CD4-positive, alpha-beta memory T cell (primary cell): ENCODE measurements at regions of chr2 and their contacts with region 1.

Region 1: DNA sequence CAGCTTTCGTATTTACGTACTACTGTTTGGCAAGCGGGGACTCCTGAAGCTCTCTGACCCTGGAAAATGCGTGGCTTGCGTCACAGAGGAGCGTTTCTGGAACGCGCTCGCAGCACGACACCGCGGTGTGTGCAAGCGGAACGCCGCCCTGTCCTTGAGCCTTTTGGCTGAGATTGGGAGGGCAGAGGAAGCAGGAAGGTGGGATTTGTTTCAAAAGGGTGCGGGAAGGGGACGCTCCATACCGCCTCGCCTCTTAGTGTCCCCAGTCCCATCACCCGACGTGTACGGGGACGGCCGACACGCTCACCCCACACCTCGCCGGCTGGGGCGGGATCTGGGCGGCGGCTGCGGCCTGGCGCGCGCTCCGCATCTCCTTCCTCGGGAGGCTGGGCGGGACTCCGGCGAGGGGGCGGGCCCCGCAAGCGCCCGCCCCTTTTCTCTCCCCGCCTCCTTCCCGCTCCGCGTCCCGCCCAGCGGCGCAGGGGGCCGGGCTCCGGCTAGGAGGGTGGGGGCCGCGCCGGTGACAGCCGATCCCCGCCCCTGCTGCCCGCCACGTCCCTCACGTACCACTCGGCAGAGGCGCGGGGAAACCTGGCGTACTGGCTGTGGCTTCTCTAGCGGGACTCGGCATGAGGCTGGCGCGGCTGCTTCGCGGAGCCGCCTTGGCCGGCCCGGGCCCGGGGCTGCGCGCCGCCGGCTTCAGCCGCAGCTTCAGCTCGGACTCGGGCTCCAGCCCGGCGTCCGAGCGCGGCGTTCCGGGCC is at the start of gene PDK1:
- DNase-seq: peak; percentile 90 to 94 (median 93)
- H3K4me3 ChIP-seq: peak within 1 kb of the TSS; percentile 62 to 82
- H3K4me3 Mint-ChIP-seq: peak within 1 kb of the TSS; percentile 90 to 97 (median 94)
- H3K27ac ChIP-seq: peak within 1 kb of the TSS; percentile 82
- H3K27ac Mint-ChIP-seq: peak within 1 kb of the TSS; percentile 78 to 96 (median 93)
- H3K4me1 ChIP-seq: peaks cover 31% of the 10 kb centered on the region
- H3K4me1 Mint-ChIP-seq: peaks cover 22 to 51% (median 38%) of the 10 kb centered on the region in 4 donors
- H3K27me3 ChIP-seq: no peaks in the 10 kb centered on the region
- H3K27me3 Mint-ChIP-seq: peaks cover 0 to 1% of the 10 kb centered on the region in 2 donors
- total RNA-seq, gene PDK1: 34.2 to 36.8 TPM

Region 2: DNA sequence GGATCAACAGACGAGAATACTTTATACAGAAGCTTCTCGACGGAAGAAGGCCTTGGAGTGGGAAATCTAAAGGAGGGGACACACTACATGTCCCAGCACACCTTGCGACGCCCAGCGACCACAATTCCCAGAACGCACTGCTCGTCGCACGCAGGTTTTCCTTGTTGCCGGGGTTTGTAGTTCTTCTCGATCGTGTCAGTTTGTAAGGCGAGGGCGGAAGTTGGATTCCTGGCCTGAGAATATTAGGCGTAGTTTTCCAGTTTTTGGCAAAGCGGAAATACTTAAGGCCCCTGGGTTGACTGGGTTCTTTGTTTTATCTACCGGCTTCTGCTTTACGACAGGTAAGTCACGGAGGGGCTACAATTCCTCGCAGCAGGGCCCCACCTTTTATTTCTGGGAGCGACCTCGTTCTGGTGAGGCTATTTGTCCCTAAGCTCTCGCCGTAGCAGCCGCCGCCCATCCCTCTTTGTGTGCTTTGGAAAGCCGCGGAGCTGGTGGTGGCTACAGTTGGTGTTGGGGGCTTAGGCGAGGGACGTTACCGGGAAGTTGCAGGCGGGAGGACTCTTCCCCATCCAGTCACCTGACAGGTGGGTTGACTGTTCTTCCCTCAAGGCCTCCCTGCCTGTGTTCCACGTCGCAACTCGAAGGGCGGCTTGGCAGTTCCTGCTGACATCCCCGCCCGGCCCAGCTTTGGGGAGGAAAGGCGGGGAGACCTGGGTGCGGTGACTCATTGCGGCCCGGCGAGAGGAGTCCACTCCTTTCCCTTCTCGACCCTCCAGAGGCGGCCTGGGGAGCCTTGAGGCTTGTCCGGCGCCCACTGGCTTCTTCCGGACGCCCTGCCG is 868.2 kb before region 1 on chr2 and contains the start of gene DYNC1I2:
- CTCF ChIA-PET with region 1: no interaction called
- POLR2A ChIA-PET with region 1: no interaction called
- intact Hi-C with region 1: loop called (anchors 2 kb)
- DNase-seq: peak; percentile 72 to 83 (median 79)
- H3K4me3 ChIP-seq: peak within 1 kb of the TSS; percentile 52 to 75
- H3K4me3 Mint-ChIP-seq: peak within 1 kb of the TSS; percentile 90 to 97 (median 94)
- H3K27ac ChIP-seq: peak within 1 kb of the TSS; percentile 50
- H3K27ac Mint-ChIP-seq: peak within 1 kb of the TSS; percentile 86 to 97 (median 94)
- H3K4me1 ChIP-seq: peaks cover 13% of the 10 kb centered on the region
- H3K4me1 Mint-ChIP-seq: peaks cover 20 to 31% (median 27%) of the 10 kb centered on the region in 4 donors
- H3K27me3 ChIP-seq: no peaks in the 10 kb centered on the region
- H3K27me3 Mint-ChIP-seq: no peaks in the 10 kb centered on the region
- total RNA-seq, gene DYNC1I2: 50.2 to 50.3 TPM

Region 3: DNA sequence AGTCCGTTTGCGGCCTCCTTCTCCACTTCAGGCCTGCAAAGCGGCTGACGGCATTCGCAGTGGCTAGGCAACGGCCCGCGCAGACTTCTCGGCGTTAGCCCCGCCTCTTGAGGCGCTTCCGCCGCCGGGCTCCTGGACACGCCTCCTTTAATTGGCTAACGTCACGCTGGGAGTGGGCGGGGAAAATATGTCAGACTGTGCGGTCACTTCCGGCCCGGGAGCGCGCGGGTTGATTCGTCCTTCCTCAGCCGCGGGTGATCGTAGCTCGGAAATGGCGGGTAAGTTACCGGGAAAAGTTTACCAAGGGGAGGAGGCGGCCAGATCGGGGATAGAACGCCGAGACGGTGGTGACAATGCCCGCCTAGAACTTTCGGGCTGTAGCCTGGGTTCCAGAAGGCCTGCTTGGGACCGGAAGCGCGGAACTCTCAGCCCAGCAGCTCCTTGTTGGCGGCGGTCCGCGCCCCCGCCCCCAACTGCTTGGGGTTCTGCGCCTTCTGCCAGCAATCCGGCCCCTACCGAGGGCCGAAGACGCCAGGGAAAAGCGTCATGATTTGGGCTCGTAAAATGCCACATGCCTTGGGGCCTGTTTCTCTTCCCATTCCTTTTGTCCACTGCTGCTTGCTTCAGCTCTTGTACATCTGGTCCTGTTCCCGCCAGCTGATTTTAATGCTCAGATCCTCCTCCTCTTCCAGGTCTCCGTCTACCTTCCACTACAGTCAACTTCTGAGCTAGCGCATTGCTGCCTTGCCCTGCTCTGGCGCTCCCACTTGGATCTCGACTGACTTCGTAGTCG is 633.3 kb before region 1 on chr2 and contains the start of gene HAT1:
- CTCF ChIA-PET with region 1: no interaction called
- POLR2A ChIA-PET with region 1: interaction called, 5 read pairs
- intact Hi-C with region 1: loop called (anchors 1 kb)
- DNase-seq: peak; percentile 96 to 98 (median 97)
- H3K4me3 ChIP-seq: peak within 1 kb of the TSS; percentile 70 to 88
- H3K4me3 Mint-ChIP-seq: peak within 1 kb of the TSS; percentile 98 to 100 (median 100)
- H3K27ac ChIP-seq: peak within 1 kb of the TSS; percentile 95
- H3K27ac Mint-ChIP-seq: peak within 1 kb of the TSS; percentile 93 to 100 (median 99)
- H3K4me1 ChIP-seq: peaks cover 39% of the 10 kb centered on the region
- H3K4me1 Mint-ChIP-seq: peaks cover 18 to 46% (median 33%) of the 10 kb centered on the region in 4 donors
- H3K27me3 ChIP-seq: no peaks in the 10 kb centered on the region
- H3K27me3 Mint-ChIP-seq: no peaks in the 10 kb centered on the region
- total RNA-seq, gene HAT1: 22.6 to 27.7 TPM

Region 4: GRCh38 chr2:172427256-172427989 is 128.3 kb before region 1 on chr2 and contains the start of gene ITGA6:
- CTCF ChIA-PET with region 1: interaction called, 4 read pairs
- POLR2A ChIA-PET with region 1: no interaction called
- intact Hi-C with region 1: loop called (anchors 2 kb)
- DNase-seq: peak; percentile 75 to 84 (median 78)
- H3K4me3 ChIP-seq: peak within 1 kb of the TSS; percentile 31 to 76
- H3K4me3 Mint-ChIP-seq: peak within 1 kb of the TSS; percentile 88 to 97 (median 94)
- H3K27ac ChIP-seq: peak within 1 kb of the TSS; percentile 66
- H3K27ac Mint-ChIP-seq: peak within 1 kb of the TSS; percentile 92 to 95 (median 93)
- H3K4me1 ChIP-seq: peaks cover 65% of the 10 kb centered on the region
- H3K4me1 Mint-ChIP-seq: peaks cover 30 to 52% (median 46%) of the 10 kb centered on the region in 4 donors
- H3K27me3 ChIP-seq: no peaks in the 10 kb centered on the region
- H3K27me3 Mint-ChIP-seq: no peaks in the 10 kb centered on the region
- total RNA-seq, gene ITGA6: 69.1 to 73.6 TPM